ENCODE measurements at regions of chr11 and their contacts with region 1.

Region 1: GRCh38 chr11:75241036-75241905 is 697 bp downstream of the TPBGL start:
- DNase-seq: peak; percentile 95
- CTCF ChIP-seq: peak; percentile 99

Region 2: DNA sequence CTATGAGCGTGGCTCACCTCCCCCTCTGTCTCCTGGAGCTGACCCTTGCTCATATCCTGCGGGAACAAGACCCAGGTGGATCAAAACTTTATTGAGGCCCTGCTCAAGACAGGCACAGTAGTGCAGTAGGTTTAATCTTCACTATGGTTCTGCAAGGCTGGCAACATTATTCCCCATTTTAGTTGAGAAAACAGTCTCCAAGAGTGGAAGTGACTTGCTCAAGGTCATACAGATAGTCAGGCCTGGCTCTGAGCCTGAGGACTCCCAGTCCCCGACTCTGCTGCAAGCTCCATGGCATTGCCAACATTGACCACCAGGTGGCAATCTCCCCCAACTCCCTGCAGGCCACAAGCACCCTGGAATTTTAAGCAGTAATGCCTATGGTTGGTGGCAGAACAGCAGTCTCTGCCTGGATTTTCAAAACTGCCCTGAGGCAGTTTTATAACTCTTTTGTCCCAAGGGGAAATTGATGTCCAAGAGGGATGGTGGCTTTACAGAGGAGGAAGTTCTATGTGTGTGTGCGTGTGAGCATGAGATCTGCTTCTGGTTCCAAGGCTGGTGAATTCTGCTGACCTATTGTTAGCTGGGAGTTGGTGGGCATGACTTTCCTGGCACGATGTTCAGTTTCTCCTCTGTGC is 218.4 kb before region 1 on chr11:
- CTCF ChIA-PET with region 1: interaction called, 26 read pairs
- POLR2A ChIA-PET with region 1: no interaction called
- DNase-seq: peak; percentile 83
- CTCF ChIP-seq: peak; percentile 97

Region 3: DNA sequence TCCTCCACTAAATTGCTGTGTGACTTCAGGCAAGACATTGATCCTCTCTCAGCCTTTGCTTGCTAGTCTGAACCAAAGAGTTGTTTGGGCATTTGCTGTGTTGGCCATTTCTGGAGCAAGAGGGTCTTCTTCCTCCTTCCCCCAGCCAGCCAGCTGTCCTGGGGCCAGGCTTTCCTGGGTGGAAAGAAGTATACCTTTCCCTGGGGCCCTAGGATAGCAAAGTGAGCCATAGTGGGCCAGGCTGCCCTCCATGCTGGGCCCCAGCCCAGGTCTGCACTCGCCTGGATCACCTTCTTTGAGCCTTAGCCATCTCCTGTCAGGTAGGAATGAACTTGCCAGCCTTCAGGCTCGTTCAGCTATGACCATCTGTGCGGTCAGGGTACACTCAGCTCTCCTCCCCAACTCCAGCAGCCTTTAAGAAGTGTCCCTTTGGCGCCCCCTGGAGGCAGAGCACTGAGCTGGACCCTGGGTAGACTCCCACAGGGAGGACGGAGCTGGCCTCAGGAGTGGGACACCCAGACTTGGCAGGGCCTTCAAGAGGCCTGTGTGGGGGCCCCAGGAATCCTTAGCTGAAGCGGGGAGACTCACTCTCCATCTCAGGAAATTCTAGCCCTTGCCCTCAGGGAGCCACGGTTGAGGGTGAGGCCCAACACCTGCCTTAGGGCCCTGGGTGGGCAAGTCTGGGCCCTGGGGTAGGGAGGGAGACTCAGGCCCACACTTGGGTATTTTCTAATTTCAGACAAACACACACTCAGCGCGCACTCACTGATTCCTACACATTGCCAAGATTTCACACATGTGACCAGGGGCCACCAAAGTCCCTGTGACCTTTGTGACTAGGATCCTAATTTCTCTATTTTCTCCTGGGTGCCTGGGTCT is 36.3 kb before region 1 on chr11:
- CTCF ChIA-PET with region 1: interaction called, 30 read pairs
- POLR2A ChIA-PET with region 1: no interaction called
- DNase-seq: peak; percentile 88
- CTCF ChIP-seq: peak; percentile 92

Region 4: DNA sequence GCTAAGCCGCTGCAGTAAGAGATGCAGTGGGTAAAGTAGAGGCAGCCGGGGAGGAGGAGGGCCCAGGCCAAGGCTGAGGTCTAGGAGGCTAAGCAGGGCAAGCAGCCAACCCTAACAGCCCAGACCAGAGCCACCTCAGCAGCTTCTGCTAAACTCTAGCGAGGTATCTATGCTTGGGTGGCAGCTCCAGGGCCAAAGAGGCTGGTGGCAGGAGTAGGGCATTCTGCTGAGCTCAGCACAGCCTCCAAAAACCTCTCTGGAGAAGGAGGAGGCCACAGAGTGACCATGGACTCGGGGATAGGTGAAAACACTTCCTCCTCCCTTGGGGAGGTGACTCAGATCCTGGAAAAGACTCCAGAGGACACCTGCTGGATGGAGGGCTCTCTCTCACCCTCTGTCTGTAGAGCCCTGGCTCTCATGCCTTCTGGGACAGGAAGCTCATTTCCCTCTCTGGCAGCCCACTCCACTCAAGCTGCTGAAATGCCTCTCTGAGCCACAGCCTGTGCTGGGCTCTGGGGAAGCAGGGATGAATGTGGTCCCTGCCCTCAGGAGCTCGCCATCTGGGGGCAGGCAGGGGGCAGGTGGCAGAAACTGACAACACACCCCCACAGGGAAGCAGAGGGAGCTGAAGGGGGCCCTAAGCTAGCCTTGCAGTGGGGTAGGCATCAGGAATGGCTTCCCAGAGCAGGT is 17.2 kb before region 1 on chr11:
- CTCF ChIA-PET with region 1: interaction called, 34 read pairs
- POLR2A ChIA-PET with region 1: no interaction called
- DNase-seq: no peak
- CTCF ChIP-seq: no peak

Region 5: GRCh38 chr11:75428281-75428724 is 187.0 kb after region 1 on chr11:
- CTCF ChIA-PET with region 1: no interaction called
- POLR2A ChIA-PET with region 1: no interaction called
- DNase-seq: peak; percentile 88
- CTCF ChIP-seq: no peak

Measured in GM10248 (cell line).